ENCODE measurements at regions of chr14 and their contacts with region 1.

Region 1: DNA sequence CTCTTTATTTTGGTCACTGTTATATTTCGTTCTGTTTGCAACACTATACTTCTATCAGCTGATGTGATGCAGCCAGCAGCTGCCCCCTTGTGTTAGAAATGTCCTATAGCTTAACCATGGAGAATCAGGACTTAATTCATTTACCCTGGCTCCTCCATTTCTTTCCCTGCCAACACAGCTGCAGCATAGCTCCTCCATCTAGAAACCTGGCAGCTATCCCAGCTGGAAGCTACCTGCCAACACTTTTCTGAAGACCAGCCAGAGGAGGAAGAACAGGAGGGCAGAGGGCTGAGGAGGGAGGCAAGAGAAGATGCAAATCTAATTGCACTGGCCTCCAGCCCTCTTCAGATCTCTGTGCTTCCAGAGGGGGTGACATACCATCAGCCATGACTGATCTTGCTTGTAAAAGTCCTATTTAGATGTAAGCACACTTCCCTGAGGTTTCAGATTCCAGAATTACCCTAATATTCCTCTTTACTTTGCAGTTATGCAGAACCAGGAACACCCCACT is 156.8 kb upstream of the TMEM260 start:
- DNase-seq: peak; percentile 84
- H3K4me3 ChIP-seq: no peak overlapping the region
- H3K27ac ChIP-seq: no peak overlapping the region
- H3K4me1 ChIP-seq: no peaks in the 10 kb centered on the region
- H3K27me3 ChIP-seq: no peaks in the 10 kb centered on the region
- CTCF ChIP-seq: peak; percentile 59 to 71
- POLR2A ChIP-seq: no peak

Region 2: GRCh38 chr14:55707365-55707804 is 715.4 kb before region 1 on chr14:
- CTCF ChIA-PET with region 1: interaction called, 24 read pairs
- POLR2A ChIA-PET with region 1: no interaction called
- dilution Hi-C with region 1: no loop called
- intact Hi-C with region 1: no loop called
- DNase-seq: peak; percentile 51
- H3K4me3 ChIP-seq: no peak overlapping the region
- H3K27ac ChIP-seq: no peak overlapping the region
- H3K4me1 ChIP-seq: no peaks in the 10 kb centered on the region
- H3K27me3 ChIP-seq: no peaks in the 10 kb centered on the region
- CTCF ChIP-seq: peak; percentile 28 to 53
- POLR2A ChIP-seq: no peak

Region 3: DNA sequence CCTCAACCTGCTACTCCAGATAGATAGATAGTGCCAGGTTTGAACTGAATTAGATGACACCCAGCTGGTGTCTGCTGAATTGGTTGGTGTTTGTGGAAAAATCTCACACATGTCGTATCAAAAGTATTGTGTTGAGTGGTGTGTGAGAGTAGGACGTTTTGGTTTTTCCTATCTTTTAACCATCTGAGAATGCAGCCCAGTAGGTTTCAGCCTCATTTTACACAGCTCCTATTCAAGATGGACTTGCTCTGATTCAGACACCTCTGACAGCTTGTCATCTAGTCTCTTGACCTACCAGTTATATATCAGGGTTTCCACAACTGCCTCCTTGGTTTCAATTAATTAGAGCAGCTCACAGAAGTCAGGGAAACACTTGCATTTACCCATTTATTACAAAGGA is 588.4 kb before region 1 on chr14:
- CTCF ChIA-PET with region 1: no interaction called
- POLR2A ChIA-PET with region 1: no interaction called
- dilution Hi-C with region 1: no loop called
- intact Hi-C with region 1: no loop called
- DNase-seq: no peak
- H3K4me3 ChIP-seq: no peak overlapping the region
- H3K27ac ChIP-seq: no peak overlapping the region
- H3K4me1 ChIP-seq: peaks cover 2% of the 10 kb centered on the region
- H3K27me3 ChIP-seq: no peaks in the 10 kb centered on the region
- CTCF ChIP-seq: no peak
- POLR2A ChIP-seq: no peak

Region 4: GRCh38 chr14:55846826-55847446 is 575.8 kb before region 1 on chr14:
- CTCF ChIA-PET with region 1: interaction called, 8 read pairs
- POLR2A ChIA-PET with region 1: no interaction called
- dilution Hi-C with region 1: no loop called
- intact Hi-C with region 1: loop called (anchors 10 kb)
- DNase-seq: no peak
- H3K4me3 ChIP-seq: no peak overlapping the region
- H3K27ac ChIP-seq: no peak overlapping the region
- H3K4me1 ChIP-seq: peaks cover 8% of the 10 kb centered on the region
- H3K27me3 ChIP-seq: no peaks in the 10 kb centered on the region
- CTCF ChIP-seq: no peak
- POLR2A ChIP-seq: no peak

Region 5: DNA sequence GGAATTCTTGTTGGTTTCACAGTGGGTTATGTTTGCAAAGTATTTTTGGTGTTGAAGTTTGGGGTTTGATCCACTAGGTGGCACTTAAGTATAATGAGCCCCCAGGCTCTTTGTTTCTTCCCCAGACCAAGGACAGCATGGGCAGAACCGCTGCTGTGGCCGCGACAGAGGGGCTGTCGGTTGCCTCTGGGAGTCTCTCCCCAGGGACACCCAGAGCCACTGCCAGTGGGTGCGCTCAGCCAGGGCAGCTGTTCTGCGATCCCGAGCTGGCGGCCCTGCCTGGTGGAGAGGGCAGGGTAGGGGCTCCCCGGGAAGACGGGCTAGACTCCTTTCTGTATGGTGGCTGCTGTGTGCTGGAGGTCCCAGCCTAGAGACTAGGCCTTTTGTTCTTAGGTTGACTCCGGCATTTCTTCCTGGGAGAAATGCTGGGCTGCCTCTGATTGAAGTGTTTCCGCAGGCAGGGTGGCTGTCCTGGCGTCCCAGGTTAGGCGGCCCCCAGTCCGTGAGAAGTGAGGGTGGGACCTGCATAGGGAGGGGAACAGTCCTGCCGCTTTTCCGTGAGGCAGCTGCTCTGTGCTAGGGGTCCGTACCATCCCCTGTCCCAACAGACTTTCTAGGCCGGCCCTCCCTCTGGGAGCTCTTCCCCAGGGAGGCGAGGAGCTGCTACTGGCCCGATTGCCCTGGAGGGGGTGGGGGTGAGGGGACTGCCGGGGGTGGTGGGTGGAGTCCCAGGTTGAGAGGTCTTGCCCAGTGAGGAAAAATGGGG is 557.7 kb before region 1 on chr14:
- CTCF ChIA-PET with region 1: interaction called, 4 read pairs
- POLR2A ChIA-PET with region 1: no interaction called
- dilution Hi-C with region 1: no loop called
- intact Hi-C with region 1: loop called (anchors 5 kb)
- DNase-seq: no peak
- H3K4me3 ChIP-seq: no peak overlapping the region
- H3K27ac ChIP-seq: no peak overlapping the region
- H3K4me1 ChIP-seq: peaks cover 9% of the 10 kb centered on the region
- H3K27me3 ChIP-seq: no peaks in the 10 kb centered on the region
- CTCF ChIP-seq: peak in 1 of 2 donors; percentile 4
- POLR2A ChIP-seq: no peak

Region 6: GRCh38 chr14:56247468-56248200 is 175.1 kb before region 1 on chr14:
- CTCF ChIA-PET with region 1: interaction called, 7 read pairs
- POLR2A ChIA-PET with region 1: no interaction called
- dilution Hi-C with region 1: no loop called
- intact Hi-C with region 1: loop called (anchors 1 kb)
- DNase-seq: peak; percentile 48
- H3K4me3 ChIP-seq: no peak overlapping the region
- H3K27ac ChIP-seq: no peak overlapping the region
- H3K4me1 ChIP-seq: no peaks in the 10 kb centered on the region
- H3K27me3 ChIP-seq: no peaks in the 10 kb centered on the region
- CTCF ChIP-seq: peak in 1 of 2 donors; percentile 7
- POLR2A ChIP-seq: no peak

Region 7: GRCh38 chr14:56378475-56378877 is 44.3 kb before region 1 on chr14:
- CTCF ChIA-PET with region 1: interaction called, 8 read pairs
- POLR2A ChIA-PET with region 1: no interaction called
- dilution Hi-C with region 1: no loop called
- intact Hi-C with region 1: loop called (anchors 2 kb)
- DNase-seq: peak; percentile 90
- H3K4me3 ChIP-seq: no peak overlapping the region
- H3K27ac ChIP-seq: peak overlapping the region; percentile 54
- H3K4me1 ChIP-seq: peaks cover 24% of the 10 kb centered on the region
- H3K27me3 ChIP-seq: no peaks in the 10 kb centered on the region
- CTCF ChIP-seq: no peak
- POLR2A ChIP-seq: no peak

Region 8: GRCh38 chr14:56808383-56809269 is 385.9 kb after region 1 on chr14:
- CTCF ChIA-PET with region 1: no interaction called
- POLR2A ChIA-PET with region 1: no interaction called
- dilution Hi-C with region 1: no loop called
- intact Hi-C with region 1: no loop called
- DNase-seq: no peak
- H3K4me3 ChIP-seq: no peak overlapping the region
- H3K27ac ChIP-seq: no peak overlapping the region
- H3K4me1 ChIP-seq: no peaks in the 10 kb centered on the region
- H3K27me3 ChIP-seq: peaks cover 87 to 99% of the 10 kb centered on the region in 2 experiments
- CTCF ChIP-seq: no peak
- POLR2A ChIP-seq: no peak

Region 9: DNA sequence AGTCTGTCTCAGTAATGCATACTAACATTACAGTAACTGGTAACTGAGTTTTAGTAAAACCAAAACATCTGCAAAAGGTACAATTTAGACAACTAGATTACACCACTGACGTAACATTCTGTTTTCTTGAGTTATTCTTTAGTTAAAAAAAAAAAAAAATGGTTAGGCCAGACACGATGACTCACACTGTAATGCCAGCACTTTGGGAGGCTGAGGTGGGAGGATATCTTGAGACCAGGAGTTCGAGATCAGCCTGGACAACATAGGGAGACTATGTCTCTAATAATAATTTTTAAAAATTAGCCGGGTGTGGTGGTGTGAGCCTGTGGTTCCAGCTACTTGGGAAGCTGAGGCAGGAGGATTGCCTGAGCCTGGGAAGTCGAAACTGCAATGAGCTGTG is 880.1 kb after region 1 on chr14:
- CTCF ChIA-PET with region 1: no interaction called
- POLR2A ChIA-PET with region 1: no interaction called
- dilution Hi-C with region 1: no loop called
- intact Hi-C with region 1: no loop called
- DNase-seq: no peak
- H3K4me3 ChIP-seq: no peak overlapping the region
- H3K27ac ChIP-seq: no peak overlapping the region
- H3K4me1 ChIP-seq: no peaks in the 10 kb centered on the region
- H3K27me3 ChIP-seq: peaks cover 7 to 24% of the 10 kb centered on the region in 2 experiments
- CTCF ChIP-seq: no peak
- POLR2A ChIP-seq: no peak

Measured in endothelial cell of umbilical vein (primary cell).